ENCODE measurements at regions of chr21 and their contacts with region 1.

Region 1: GRCh38 chr21:34526618-34527290 is 14.7 kb upstream of the KCNE1 start:
- DNase-seq: peak; percentile 97
- ATAC-seq: peak; percentile 96
- H3K4me3 ChIP-seq: peak overlapping the region; percentile 70
- H3K27ac ChIP-seq: peak overlapping the region; percentile 82
- H3K4me1 ChIP-seq: peaks cover 24% of the 10 kb centered on the region
- H3K27me3 ChIP-seq: no peaks in the 10 kb centered on the region
- CTCF ChIP-seq: no peak

Region 2: DNA sequence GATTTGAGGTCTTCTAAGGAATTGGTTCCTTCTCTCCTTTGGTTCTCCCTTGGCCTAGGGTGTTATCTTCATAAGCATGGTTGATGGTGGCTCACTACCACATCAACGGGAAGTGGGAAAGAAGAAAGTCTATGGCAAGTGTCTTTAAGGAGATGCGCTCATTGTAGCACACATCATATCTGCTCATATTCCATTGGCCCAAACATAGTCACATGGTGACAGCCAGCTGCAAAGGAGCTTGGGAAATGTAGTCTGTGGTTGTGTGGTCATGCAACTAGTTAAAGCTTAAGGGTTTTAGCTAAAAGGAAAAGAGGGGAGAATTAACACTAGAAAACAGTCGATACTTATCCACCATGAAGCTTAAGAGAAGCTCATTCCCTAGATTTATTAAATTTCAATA is 464.8 kb before region 1 on chr21:
- CTCF ChIA-PET with region 1: no interaction called
- POLR2A ChIA-PET with region 1: no interaction called
- intact Hi-C with region 1: no loop called
- DNase-seq: peak; percentile 13
- ATAC-seq: peak; percentile 29; the same call in 1 of the 2 replicates
- H3K4me3 ChIP-seq: no peak overlapping the region
- H3K27ac ChIP-seq: no peak overlapping the region
- H3K4me1 ChIP-seq: no peaks in the 10 kb centered on the region
- H3K27me3 ChIP-seq: no peaks in the 10 kb centered on the region
- CTCF ChIP-seq: no peak

Region 3: GRCh38 chr21:34545079-34545884 is 18.5 kb after region 1 on chr21:
- CTCF ChIA-PET with region 1: interaction called, 5 read pairs
- POLR2A ChIA-PET with region 1: no interaction called
- intact Hi-C with region 1: loop called (anchors 2 kb)
- DNase-seq: peak; percentile 65
- ATAC-seq: peak; percentile 67
- H3K4me3 ChIP-seq: no peak overlapping the region
- H3K27ac ChIP-seq: peak overlapping the region; percentile 53
- H3K4me1 ChIP-seq: peaks cover 26% of the 10 kb centered on the region
- H3K27me3 ChIP-seq: no peaks in the 10 kb centered on the region
- CTCF ChIP-seq: no peak

Region 4: GRCh38 chr21:34553151-34553952 is 26.6 kb after region 1 on chr21:
- CTCF ChIA-PET with region 1: interaction called, 3 read pairs
- POLR2A ChIA-PET with region 1: interaction called, 14 read pairs
- intact Hi-C with region 1: loop called (anchors 1 kb)
- DNase-seq: peak; percentile 90
- ATAC-seq: peak; percentile 95
- H3K4me3 ChIP-seq: peak overlapping the region; percentile 36; the same call in 1 of the 2 replicates
- H3K27ac ChIP-seq: peak overlapping the region; percentile 97
- H3K4me1 ChIP-seq: peaks cover 31% of the 10 kb centered on the region
- H3K27me3 ChIP-seq: no peaks in the 10 kb centered on the region
- CTCF ChIP-seq: no peak

Region 5: DNA sequence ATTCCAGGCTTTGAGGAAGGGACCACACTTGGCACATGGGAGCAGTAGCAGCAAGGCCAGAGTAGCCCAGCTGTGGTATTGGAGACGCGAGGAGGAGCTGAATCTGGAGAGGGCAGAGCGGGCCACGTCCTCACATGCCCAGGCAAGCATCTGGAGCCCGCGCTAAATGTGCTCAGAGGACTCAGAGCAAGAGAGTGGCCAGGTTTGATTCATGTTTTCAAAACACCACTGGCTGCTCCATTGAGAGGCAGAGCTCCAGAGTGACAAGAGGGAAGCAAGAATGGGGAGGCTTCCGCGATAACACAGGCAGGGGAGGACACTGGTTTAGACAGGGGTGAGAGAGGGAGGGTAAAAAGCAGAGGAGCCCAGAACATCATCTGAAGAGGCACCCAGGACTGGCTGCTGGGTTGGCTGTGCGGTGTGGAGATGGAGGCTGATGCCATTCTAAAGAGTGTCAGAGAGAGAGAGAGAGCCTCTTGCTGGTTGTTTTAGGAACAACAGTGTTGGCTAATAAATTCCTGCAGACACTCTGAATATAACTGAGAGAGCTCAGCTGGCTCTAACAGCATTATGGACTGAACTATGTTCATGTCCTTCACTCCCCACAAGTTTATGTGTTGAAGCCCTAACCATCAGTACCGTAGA is 55.9 kb after region 1 on chr21:
- CTCF ChIA-PET with region 1: no interaction called
- POLR2A ChIA-PET with region 1: interaction called, 10 read pairs
- intact Hi-C with region 1: no loop called
- DNase-seq: peak; percentile 54
- ATAC-seq: peak; percentile 72
- H3K4me3 ChIP-seq: no peak overlapping the region
- H3K27ac ChIP-seq: no peak overlapping the region
- H3K4me1 ChIP-seq: peaks cover 9% of the 10 kb centered on the region
- H3K27me3 ChIP-seq: no peaks in the 10 kb centered on the region
- CTCF ChIP-seq: peak; percentile 64

Measured in PC-3 (cell line).